ENCODE measurements at regions of chrX and their contacts with region 1.

Region 1: GRCh38 chrX:134711135-134711921 is 53.1 kb upstream of the PLAC1 start:
- DNase-seq: no peak
- H3K4me3 ChIP-seq: no peak overlapping the region
- H3K27ac ChIP-seq: no peak overlapping the region
- H3K4me1 ChIP-seq: no peaks in the 10 kb centered on the region
- H3K27me3 ChIP-seq: no peaks in the 10 kb centered on the region
- CTCF ChIP-seq: no peak
- EP300 ChIP-seq: no peak
- POLR2A ChIP-seq: no peak

Region 2: GRCh38 chrX:135003876-135004623 is 292.7 kb after region 1 on chrX:
- intact Hi-C with region 1: loop called in 1 of 4 experiments (anchors 5 kb)
- DNase-seq: peak; percentile 88 to 94 (median 92)
- H3K4me3 ChIP-seq: peak overlapping the region; percentile 34
- H3K27ac ChIP-seq: no peak overlapping the region
- H3K4me1 ChIP-seq: no peaks in the 10 kb centered on the region
- H3K27me3 ChIP-seq: no peaks in the 10 kb centered on the region
- CTCF ChIP-seq: no peak
- EP300 ChIP-seq: no peak
- POLR2A ChIP-seq: no peak

Region 3: DNA sequence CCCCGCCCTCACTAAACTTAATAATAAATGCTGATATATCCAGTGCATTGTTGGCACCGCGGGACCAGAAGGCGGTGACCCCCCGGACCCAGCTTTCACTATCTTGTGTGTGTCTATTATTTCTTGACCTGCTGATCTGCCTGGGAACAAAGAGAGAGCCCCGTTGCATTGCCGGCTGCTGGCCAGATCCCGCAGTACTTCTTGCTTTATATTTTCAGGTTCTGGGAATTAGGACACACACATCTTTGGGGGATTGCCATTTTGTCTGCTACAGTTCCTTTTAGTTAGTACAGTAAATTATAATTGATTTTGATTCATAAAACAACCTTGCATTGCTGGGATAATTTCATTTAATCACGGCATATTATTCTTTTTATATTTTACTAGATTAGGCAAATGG is 313.2 kb after region 1 on chrX:
- intact Hi-C with region 1: no loop called
- DNase-seq: no peak
- H3K4me3 ChIP-seq: no peak overlapping the region
- H3K27ac ChIP-seq: no peak overlapping the region
- H3K4me1 ChIP-seq: no peaks in the 10 kb centered on the region
- H3K27me3 ChIP-seq: no peaks in the 10 kb centered on the region
- CTCF ChIP-seq: no peak
- EP300 ChIP-seq: no peak
- POLR2A ChIP-seq: no peak

Measured in ovary (tissue), 10 donors.